ENCODE measurements at regions of chr20 and their contacts with region 1.

Region 1: GRCh38 chr20:63009045-63009961 is 2.5 kb upstream of the BHLHE23 start:
- DNase-seq: peak; percentile 42 to 91 (median 78)

Region 2: DNA sequence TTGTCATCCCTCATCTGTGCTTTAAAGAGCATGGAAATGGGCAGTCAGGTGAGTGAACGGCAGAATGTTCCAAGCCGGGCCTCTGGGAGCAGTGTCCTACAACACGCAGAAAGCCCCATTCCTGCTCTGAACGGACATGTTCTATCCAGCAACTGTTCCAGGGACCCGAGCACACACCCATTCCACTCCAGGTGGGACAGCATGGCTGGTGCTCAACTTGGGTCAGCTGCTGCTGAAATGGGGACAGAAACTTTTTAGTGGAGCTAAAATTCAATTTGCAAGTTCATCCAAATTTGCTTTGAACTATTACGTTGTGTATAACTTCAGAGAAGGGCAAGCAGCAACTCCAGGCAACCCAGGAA is 109.6 kb before region 1 on chr20:
- intact Hi-C with region 1: loop called (anchors 10 kb)
- DNase-seq: peak in 3 of 42 donors; percentile 26 to 52 (median 29)

Measured in head of caudate nucleus (tissue), 42 donors.